ENCODE measurements at regions of chr3 and their contacts with region 1.

Region 1: DNA sequence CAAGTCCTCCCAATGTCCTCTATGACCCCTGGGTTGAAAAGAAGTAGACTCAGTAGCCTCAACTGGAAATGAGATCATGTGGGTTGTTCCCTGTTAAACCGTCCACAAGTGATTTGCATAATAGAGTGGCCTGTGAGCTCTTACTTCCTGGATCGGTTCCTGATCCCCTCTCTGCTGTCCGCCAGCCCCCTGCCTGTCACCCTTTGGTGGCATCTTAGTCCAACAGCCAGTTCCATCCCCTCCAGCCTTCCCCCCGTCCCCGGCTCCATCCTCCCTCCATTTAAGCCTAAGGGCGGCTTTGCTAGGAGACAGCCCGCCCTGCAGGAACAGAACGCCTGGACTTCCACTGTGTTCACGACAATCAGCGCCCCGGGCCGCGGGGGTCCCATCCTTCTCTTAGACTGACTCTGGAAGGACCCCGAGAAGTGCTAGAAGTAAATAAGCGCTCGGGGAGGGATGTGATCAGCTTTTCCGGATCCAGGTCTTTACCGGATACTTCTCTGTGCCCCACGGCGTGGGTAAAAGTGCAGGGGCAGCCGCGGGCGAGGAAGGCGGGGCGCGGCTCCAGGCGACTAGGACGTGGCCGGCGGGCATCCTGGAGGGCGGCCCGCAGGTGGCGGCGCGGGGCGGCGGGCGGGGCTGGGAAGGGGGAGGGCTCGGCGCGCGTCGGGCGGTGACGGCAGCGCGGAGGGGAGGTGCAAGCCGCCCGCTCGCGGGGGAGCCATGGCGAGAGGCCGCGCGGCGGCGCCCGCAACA is 51.2 kb upstream of the ULK4 start:
- DNase-seq: peak in 1 of 2 experiments; percentile 55
- H3K4me3 ChIP-seq: peak overlapping the region; percentile 66; the same call in 1 of the 2 replicates
- H3K27ac ChIP-seq: no peak overlapping the region
- H3K4me1 ChIP-seq: peaks cover 14% of the 10 kb centered on the region; the same call in 1 of the 2 replicates
- H3K27me3 ChIP-seq: no peaks in the 10 kb centered on the region
- CTCF ChIP-seq: no peak

Region 2: GRCh38 chr3:41961750-41962679 is 51.1 kb before region 1 on chr3 and contains the start of gene ULK4:
- CTCF ChIA-PET with region 1: interaction called, 3 read pairs
- POLR2A ChIA-PET with region 1: interaction called, 3 read pairs
- intact Hi-C with region 1: loop called (anchors 1 kb)
- DNase-seq: peak; percentile 97
- H3K4me3 ChIP-seq: peak within 1 kb of the TSS; percentile 93
- H3K27ac ChIP-seq: peak within 1 kb of the TSS; percentile 18; the same call in 1 of the 2 replicates
- H3K4me1 ChIP-seq: 0 out of 2 replicates have a peak, but pooled peaks cover 14% of the 10 kb centered on the region
- H3K27me3 ChIP-seq: no peaks in the 10 kb centered on the region
- CTCF ChIP-seq: no peak
- total RNA-seq, gene ULK4: 5.9 and 8.7 TPM in 2 replicates

Region 3: DNA sequence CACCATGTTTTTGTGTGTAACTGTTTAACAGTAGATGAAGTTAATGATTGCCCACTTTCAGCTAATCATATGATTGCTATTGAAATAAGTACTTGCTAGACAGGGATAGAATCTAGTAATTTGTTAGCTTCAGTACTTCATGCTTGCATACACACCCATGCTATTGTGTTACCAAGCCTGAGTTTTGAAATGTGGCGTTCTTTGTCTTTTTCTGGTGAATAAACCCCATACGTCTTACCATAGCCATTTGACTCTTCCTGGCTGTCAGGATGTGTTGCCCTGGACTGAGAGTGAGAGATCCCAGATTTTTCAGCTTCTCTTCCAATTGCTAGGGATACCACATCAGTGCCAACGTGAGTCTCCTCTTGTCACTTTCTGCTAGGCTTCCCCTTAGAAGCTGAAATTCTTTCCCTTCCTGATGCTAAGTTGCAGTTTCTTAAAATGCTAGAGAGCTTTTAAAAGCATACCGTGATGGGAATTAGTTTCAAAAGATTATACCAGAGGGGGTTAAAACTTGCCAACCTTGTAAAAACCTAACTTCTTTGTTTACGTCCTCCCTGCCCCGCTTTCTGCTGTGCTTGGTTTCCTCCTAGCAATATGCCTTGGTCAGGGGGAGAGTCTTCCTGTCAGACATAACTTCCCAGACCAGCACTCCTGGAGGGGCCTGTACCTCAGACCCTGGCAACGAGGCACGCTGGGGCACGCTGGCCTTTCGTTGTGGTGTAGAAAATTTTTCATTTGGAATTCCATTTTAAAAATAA is 11.7 kb after region 1 on chr3:
- CTCF ChIA-PET with region 1: no interaction called
- POLR2A ChIA-PET with region 1: interaction called, 12 read pairs
- intact Hi-C with region 1: no loop called
- DNase-seq: no peak
- H3K4me3 ChIP-seq: no peak overlapping the region
- H3K27ac ChIP-seq: no peak overlapping the region
- H3K4me1 ChIP-seq: peaks cover 35% of the 10 kb centered on the region
- H3K27me3 ChIP-seq: no peaks in the 10 kb centered on the region
- CTCF ChIP-seq: no peak

Region 4: DNA sequence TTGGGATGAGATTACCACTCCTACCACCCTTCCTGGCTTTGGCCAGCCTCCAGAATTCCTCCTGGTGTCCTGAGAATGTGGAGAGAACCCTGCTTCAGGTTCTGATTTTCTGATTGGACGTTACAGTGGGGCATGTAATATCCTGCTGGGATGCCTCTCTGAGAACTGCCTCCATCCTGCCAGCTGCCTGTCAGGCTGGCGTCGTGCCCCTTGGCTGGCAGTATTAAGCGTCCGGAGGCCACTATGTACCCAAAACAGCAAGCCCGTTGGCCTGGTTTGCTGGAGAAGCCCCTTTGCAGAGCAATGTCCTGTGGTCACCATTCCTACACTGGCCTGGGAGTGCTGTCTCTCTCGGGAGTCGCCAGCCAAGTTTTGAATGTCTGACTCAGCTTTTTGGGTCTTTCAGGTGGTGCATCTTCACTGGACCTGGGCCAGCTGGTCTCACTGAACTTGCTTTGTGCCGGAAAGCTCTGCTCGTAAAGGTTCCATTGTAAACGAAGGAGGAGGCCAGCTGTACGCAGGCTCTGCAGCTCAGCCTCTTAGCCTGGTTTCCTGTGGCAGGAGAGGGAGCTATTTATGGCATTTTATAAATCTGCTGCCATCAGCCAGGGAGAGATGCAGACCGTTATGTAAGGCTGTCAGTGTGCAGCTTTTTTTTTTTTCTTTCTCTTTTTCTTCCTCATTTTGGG is 58.9 kb after region 1 on chr3:
- CTCF ChIA-PET with region 1: no interaction called
- POLR2A ChIA-PET with region 1: no interaction called
- intact Hi-C with region 1: no loop called
- DNase-seq: no peak
- H3K4me3 ChIP-seq: no peak overlapping the region
- H3K27ac ChIP-seq: no peak overlapping the region
- H3K4me1 ChIP-seq: no peaks in the 10 kb centered on the region
- H3K27me3 ChIP-seq: no peaks in the 10 kb centered on the region
- CTCF ChIP-seq: no peak

Region 5: DNA sequence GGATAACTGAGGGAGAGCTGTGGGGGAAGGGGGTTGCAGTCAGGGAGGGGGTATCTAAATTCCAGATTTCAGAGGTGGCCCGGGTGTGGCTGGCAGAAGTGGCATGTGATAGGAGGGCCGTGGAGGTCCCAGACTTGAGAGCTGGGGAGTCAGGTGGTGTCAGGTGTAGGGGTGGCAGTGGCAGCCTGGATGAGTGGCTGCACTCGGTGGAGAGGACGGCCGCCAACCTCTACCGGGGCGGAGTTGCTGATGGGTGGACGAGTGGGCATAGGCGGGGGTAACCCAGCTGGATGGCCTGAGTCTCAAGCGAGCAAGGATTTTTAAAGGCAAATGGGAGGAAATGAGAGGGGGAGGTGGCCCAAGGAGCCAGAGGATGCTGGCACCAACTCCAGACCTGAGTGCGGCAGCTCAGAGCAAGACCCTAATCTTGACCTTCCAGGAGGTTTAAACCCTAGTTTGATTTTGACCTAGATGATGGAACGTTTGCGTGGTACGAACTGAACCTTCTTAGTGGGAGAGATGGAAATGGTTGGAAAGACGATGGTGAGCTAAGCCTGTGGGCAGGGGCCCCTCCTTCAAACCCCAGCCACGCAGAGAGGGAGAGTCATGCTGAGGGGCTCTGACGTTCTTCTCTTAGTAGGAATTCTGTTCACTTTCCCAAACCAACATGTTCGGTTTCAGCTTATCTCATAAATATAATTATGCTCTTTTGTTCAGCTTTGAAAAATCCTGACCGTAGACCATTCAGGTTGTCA is 86.1 kb after region 1 on chr3:
- CTCF ChIA-PET with region 1: no interaction called
- POLR2A ChIA-PET with region 1: no interaction called
- intact Hi-C with region 1: loop called (anchors 2 kb)
- DNase-seq: no peak
- H3K4me3 ChIP-seq: no peak overlapping the region
- H3K27ac ChIP-seq: no peak overlapping the region
- H3K4me1 ChIP-seq: no peaks in the 10 kb centered on the region; the same call in 1 of the 2 replicates
- H3K27me3 ChIP-seq: no peaks in the 10 kb centered on the region
- CTCF ChIP-seq: no peak

Region 6: DNA sequence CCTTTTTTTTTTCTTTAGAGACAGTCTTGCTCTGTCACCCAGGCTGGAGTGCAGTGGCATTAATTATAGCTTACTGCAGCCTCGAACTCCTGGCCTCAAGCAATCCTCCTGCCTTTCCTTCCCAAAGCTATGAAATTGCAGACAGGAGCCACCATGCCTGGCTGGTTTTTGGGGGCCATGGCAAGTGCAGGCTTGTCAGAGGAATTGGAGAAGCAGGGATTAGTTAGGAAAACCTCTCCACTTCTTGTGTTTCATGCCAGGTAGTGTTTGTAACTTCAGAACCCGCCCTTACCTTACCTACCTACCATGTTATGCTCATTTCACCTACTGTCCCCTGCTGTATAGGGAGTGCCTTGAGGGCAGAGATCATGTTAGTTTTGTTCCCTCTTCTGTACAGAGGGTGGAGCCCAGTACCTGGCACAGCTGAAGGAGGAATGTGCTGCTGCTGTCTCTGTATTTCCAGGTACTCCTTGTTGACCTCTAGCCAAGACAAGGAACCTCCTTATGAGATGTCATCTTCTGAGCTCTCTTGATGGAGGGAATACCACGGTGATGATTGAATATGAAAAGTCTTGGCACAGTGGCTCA is 121.9 kb after region 1 on chr3:
- CTCF ChIA-PET with region 1: no interaction called
- POLR2A ChIA-PET with region 1: no interaction called
- intact Hi-C with region 1: no loop called
- DNase-seq: peak; percentile 58 to 72
- H3K4me3 ChIP-seq: no peak overlapping the region
- H3K27ac ChIP-seq: peak overlapping the region; percentile 17; the same call in 1 of the 2 replicates
- H3K4me1 ChIP-seq: peaks cover 26% of the 10 kb centered on the region
- H3K27me3 ChIP-seq: no peaks in the 10 kb centered on the region
- CTCF ChIP-seq: no peak

Measured in PC-9 (cell line).